ENCODE measurements at regions of chr7 and their contacts with region 1.

Region 1: GRCh38 chr7:108002726-108003598 is at the start of gene LAMB1:
- DNase-seq: peak in 1 of 2 donors; percentile 80
- H3K4me3 ChIP-seq: peak within 1 kb of the TSS; percentile 64 to 89
- H3K27ac ChIP-seq: peak within 1 kb of the TSS; percentile 81 to 85
- H3K4me1 ChIP-seq: peaks cover 0 to 17% of the 10 kb centered on the region in 2 donors
- H3K27me3 ChIP-seq: no peaks in the 10 kb centered on the region
- CTCF ChIP-seq: no peak
- total RNA-seq, gene LAMB1: 198 TPM

Region 2: GRCh38 chr7:107939573-107940489 is 63.1 kb before region 1 on chr7:
- intact Hi-C with region 1: loop called (anchors 2 kb)
- DNase-seq: peak in 1 of 2 donors; percentile 88
- H3K4me3 ChIP-seq: no peak overlapping the region
- H3K27ac ChIP-seq: peak overlapping the region; percentile 85 to 88
- H3K4me1 ChIP-seq: peaks cover 13 to 22% of the 10 kb centered on the region in 2 donors
- H3K27me3 ChIP-seq: no peaks in the 10 kb centered on the region
- CTCF ChIP-seq: no peak

Region 3: DNA sequence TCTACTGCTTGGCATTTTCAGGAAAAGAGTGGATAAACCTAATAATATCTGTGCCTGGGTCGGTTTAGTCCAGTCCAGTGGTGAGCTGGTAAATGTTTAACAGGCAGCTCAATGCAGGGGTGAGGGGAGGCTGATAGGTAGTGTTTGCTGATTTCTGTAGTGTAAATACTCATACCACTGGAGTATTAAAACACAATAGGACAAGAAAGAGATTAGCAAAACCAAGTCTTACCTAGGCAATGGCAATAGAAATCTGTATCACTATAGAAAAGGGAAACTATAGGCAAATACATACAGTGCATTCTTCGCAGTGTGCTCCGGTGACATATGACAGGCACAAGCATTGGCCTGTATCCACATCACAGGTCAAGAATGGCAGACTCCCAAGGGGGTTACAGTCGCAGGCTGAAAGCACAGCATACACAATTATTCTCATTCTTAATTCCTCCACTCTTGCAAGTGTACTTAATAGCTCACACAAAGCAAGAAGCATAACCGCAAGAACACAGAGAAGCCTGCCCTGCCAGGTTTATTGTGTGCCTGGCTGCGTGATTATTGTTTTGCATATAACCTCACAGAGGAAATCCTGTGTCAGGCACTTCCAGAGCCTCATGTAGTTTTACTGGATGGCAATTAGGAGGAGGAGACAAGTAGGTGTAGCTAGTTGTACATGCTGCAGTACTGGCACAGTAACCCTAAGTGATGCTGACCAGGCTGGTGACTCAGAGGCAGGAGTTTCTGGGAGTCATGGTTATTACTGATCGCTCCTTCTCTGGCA is 92.2 kb after region 1 on chr7:
- intact Hi-C with region 1: loop called (anchors 5 kb)
- DNase-seq: peak; percentile 34 to 78
- H3K4me3 ChIP-seq: no peak overlapping the region
- H3K27ac ChIP-seq: no peak overlapping the region
- H3K4me1 ChIP-seq: peaks cover 0 to 8% of the 10 kb centered on the region in 2 donors
- H3K27me3 ChIP-seq: no peaks in the 10 kb centered on the region
- CTCF ChIP-seq: no peak

Region 4: DNA sequence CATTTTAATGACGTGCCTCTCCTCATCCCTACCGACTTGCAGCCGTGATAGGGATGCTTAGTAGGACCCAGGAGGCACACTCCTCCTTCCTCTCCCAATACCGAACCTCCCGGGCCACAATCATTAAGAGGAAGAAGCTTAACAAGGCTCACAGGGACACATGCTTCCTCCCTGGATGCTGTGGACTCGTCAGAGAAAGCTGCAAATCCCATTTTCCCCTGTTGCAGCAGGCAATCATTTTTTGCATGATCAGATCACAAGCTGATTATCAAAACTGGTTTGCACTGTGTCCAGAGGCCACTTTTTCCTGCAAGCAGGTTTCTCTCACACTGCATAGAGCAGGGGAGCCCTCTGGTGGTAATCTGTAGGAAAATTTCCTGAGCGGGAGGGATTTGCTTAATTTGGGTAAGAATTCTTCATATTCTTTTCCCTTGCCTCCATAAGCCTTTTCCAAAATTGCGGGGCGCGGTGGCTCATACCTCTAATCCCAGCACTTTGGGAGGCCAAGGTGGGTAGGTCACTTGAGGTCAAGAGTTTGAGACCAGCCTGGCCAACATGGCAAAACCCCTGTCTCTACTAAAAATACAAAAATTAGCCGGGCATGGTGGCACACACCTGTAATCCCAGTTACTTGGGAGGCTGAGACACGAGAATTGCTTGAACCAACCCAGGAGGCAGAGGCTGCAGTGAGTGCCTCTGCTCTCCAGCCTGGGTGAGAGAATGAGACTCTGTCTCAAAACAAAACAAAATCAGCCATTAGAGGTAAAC is 143.3 kb after region 1 on chr7:
- intact Hi-C with region 1: loop called (anchors 5 kb)
- DNase-seq: peak in 1 of 2 donors; percentile 75
- H3K4me3 ChIP-seq: no peak overlapping the region
- H3K27ac ChIP-seq: no peak overlapping the region
- H3K4me1 ChIP-seq: no peaks in the 10 kb centered on the region
- H3K27me3 ChIP-seq: no peaks in the 10 kb centered on the region
- CTCF ChIP-seq: peak; percentile 64 to 93 (median 80)

Region 5: GRCh38 chr7:108770981-108771745 is 768.2 kb after region 1 on chr7:
- intact Hi-C with region 1: no loop called
- DNase-seq: no peak
- H3K4me3 ChIP-seq: no peak overlapping the region
- H3K27ac ChIP-seq: no peak overlapping the region
- H3K4me1 ChIP-seq: no peaks in the 10 kb centered on the region
- H3K27me3 ChIP-seq: no peaks in the 10 kb centered on the region
- CTCF ChIP-seq: no peak

Measured in ascending aorta (tissue), 2 donors.